Activated naive CD4-positive, alpha-beta T cell treated with anti-CD3 and anti-CD28 coated beads for 36 hours (primary cell): ENCODE measurements at regions of chr3 and their contacts with region 1.

Region 1: DNA sequence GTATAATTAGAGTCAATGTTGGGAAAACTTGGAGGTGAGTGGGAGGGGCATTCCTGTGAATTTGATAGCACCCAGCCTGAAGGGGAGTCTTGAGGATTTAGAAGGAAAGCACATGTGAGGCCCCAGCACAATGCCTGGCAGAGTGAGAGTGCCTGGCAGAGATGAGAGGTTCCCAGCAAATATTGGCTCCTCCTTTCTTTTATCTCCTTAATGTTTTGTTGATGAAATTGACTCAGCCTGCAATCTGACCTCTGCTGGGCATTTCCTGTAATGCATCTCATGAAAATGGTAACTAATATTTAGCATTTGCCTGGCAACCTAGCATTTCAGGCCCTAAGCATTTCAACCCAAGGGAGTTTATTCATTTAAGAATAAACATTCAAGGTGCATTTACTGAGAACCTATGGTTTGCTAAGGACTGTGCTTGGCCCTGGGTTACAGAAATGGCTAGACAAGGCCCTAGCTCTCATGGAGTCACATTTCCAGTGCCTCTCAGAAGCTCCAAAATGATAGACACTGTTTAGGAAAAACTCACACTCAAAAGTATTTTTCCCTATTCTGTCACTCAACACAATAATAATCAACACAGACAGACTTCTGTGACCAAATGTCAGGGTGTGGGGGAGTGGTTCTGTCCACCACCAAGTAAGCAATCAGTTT is 19.0 kb downstream of the PDHB start:
- DNase-seq: peak; percentile 68
- H3K4me3 Mint-ChIP-seq: no peak overlapping the region
- H3K27ac Mint-ChIP-seq: no peak overlapping the region
- H3K4me1 Mint-ChIP-seq: peaks cover 6% of the 10 kb centered on the region
- H3K27me3 Mint-ChIP-seq: no peaks in the 10 kb centered on the region

Region 2: GRCh38 chr3:58237238-58237940 is 177.3 kb before region 1 on chr3 and contains the start of gene ABHD6:
- CTCF ChIA-PET with region 1: interaction called, 3 read pairs
- intact Hi-C with region 1: loop called (anchors 1 kb)
- DNase-seq: peak; percentile 75
- H3K4me3 Mint-ChIP-seq: peak within 1 kb of the TSS; percentile 86
- H3K27ac Mint-ChIP-seq: peak within 1 kb of the TSS; percentile 46
- H3K4me1 Mint-ChIP-seq: peaks cover 10% of the 10 kb centered on the region
- H3K27me3 Mint-ChIP-seq: peaks cover 6% of the 10 kb centered on the region
- total RNA-seq, gene ABHD6: 1.1 to 1.6 TPM

Region 3: DNA sequence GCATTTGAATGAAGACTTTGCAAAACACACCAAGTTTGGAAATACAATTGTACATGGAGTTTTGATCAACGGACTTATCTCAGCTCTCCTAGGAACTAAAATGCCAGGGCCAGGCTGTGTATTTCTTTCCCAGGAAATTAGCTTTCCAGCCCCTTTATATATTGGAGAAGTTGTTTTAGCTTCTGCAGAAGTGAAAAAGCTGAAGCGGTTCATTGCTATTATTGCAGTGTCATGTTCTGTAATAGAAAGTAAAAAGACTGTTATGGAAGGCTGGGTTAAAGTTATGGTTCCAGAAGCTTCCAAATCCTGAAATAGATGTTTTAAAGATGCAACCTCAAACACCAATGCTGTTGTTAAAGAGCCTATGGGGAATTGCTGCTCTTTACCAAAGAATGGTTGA is 96.9 kb before region 1 on chr3:
- CTCF ChIA-PET with region 1: interaction called, 25 read pairs
- intact Hi-C with region 1: loop called (anchors 1 kb)
- DNase-seq: no peak
- H3K4me3 Mint-ChIP-seq: no peak overlapping the region
- H3K27ac Mint-ChIP-seq: no peak overlapping the region
- H3K4me1 Mint-ChIP-seq: peaks cover 13% of the 10 kb centered on the region
- H3K27me3 Mint-ChIP-seq: no peaks in the 10 kb centered on the region